OCI-LY7 (cell line): ENCODE measurements at regions of chr12 and their contacts with region 1.

Region 1: DNA sequence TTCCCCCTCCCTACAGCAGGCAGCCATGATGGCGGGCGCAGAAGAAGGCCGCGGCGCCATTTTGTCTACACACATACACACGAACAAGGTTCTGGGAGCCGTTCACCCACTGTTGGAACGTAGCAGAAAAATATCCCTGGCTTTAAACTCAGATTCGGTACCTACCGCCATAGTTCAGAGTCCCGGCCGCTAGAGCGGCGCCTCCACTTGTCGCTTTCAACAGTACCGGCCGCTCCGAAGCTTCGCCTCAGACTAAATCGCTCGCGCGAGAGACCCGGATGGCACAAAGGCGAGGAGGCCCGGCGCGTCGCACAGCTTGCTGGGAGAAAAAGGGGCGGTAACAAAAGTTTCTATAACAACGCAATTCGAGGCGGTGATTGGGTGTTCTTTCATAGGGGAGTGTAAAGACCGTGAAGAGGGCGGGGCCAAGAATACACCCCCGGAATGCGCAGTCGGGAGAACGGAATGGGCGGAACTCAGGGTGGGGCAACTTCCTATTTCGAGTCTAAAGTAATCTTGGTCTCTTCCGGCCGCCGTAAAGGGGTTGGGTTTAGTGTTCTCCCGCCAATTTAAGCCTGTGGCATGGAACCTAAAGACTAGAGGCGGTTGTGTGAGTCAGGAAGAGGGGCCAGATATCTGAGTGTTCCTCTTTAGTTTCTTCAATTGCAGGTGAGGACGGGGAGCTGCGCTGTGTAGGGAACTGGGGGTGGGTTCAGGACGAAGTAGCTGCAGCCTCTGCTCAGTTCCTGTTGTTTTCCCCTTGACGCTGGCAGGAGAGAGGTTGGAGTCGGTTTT is at the starts of genes KNTC1 and RSRC2:
- DNase-seq: peak; percentile 100
- H3K4me3 ChIP-seq: peak within 1 kb of the TSS; percentile 99
- H3K27ac ChIP-seq: peak within 1 kb of the TSS; percentile 92
- H3K4me1 ChIP-seq: peaks cover 53% of the 10 kb centered on the region
- CTCF ChIP-seq: no peak
- total RNA-seq, gene KNTC1: 138 and 170 TPM in 2 replicates
- total RNA-seq, gene RSRC2: 91.7 and 125 TPM in 2 replicates

Region 2: GRCh38 chr12:122500685-122501488 is 26.0 kb before region 1 on chr12 and contains the start of gene ZCCHC8:
- CTCF ChIA-PET with region 1: no interaction called
- POLR2A ChIA-PET with region 1: interaction called, 37 read pairs
- intact Hi-C with region 1: loop called (anchors 1 kb)
- DNase-seq: peak; percentile 99
- H3K4me3 ChIP-seq: peak within 1 kb of the TSS; percentile 81
- H3K27ac ChIP-seq: peak within 1 kb of the TSS; percentile 87
- H3K4me1 ChIP-seq: peaks cover 48% of the 10 kb centered on the region
- CTCF ChIP-seq: peak; percentile 55
- total RNA-seq, gene ZCCHC8: 46.9 and 48.7 TPM in 2 replicates

Region 3: DNA sequence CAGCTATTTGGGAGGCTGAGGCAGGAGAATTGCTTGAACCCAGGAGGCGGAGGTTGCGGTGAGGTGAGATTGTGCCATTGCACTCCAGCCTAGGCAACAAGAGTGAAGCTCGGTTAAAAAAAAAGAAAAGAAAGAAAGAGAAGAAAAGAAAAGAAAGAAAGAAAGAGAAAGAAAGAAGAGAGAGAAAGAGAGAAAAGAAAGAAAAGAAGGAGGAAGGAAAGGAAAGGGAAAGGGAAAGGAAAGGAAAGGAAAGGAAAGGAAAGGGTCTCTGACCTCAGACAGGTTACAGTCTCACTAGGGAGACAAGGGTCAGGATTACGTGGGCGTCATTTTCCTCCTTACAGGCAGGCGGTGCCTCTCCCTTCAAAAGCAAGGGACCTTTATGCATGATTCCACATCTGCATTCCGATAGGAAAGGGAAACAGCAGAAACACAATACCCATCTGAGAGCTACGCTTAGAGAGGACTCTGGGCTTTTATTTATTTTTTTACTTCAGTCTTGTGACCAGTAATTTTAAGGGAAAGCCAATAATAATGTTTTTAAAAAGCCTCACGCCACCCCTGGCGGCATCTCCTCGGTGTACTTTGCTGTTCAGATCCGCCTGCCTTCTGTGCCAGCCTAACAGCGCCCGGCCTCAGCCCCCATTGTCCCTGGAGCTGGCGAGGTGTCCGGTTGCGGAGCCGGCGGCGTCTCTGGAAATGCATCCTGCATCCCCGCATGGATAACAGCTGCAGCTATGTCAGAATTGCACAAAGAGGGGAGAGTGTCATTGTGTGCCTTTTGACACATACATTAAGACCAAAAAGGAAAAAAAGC is 307.4 kb after region 1 on chr12:
- CTCF ChIA-PET with region 1: no interaction called
- POLR2A ChIA-PET with region 1: no interaction called
- intact Hi-C with region 1: no loop called
- DNase-seq: no peak
- H3K4me3 ChIP-seq: peak overlapping the region; percentile 74
- H3K27ac ChIP-seq: peak overlapping the region; percentile 13
- H3K4me1 ChIP-seq: peaks cover 34% of the 10 kb centered on the region
- CTCF ChIP-seq: peak; percentile 38; the same call in 1 of the 2 replicates

Region 4: DNA sequence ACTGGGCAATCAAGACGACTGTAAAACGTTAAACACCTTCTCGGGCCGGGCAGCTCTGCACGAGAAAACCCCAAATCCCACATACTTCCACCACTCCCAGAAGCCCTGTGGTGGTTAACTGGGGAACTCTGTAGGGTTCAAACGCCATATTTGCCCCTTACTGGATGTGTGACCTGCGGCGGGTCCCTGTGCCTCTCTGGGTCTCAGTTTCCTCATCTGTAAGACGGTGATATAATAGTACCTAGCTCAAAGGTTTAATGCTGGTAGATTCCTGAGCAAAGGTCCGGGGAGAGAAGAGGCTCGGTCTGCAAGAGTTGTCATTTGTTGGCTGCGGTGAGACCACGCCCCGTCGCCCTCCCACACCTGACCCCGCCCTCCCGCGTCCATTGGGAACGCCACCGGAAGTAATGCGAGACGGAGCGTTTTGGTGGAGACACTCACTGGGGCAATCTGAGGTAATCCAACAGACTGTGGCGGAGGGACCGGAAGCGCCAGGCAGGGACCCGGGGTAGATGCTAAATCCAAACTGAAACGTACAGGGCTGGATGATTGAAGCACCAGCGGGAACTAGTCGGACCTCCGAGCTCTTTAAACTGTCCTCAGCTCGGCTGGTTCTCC is 447.5 kb after region 1 on chr12:
- CTCF ChIA-PET with region 1: no interaction called
- POLR2A ChIA-PET with region 1: no interaction called
- intact Hi-C with region 1: loop called (anchors 1 kb)
- DNase-seq: peak; percentile 99
- H3K4me3 ChIP-seq: peak overlapping the region; percentile 76
- H3K27ac ChIP-seq: peak overlapping the region; percentile 89
- H3K4me1 ChIP-seq: peaks cover 30% of the 10 kb centered on the region
- CTCF ChIP-seq: no peak